HAP-1 (cell line): ENCODE measurements at regions of chr3 and their contacts with region 1.

Region 1: GRCh38 chr3:53715815-53716483 is 130.3 kb downstream of the CHDH start:
- DNase-seq: no peak
- H3K4me3 ChIP-seq: no peak overlapping the region
- H3K4me1 ChIP-seq: no peaks in the 10 kb centered on the region
- H3K27me3 ChIP-seq: no peaks in the 10 kb centered on the region

Region 2: DNA sequence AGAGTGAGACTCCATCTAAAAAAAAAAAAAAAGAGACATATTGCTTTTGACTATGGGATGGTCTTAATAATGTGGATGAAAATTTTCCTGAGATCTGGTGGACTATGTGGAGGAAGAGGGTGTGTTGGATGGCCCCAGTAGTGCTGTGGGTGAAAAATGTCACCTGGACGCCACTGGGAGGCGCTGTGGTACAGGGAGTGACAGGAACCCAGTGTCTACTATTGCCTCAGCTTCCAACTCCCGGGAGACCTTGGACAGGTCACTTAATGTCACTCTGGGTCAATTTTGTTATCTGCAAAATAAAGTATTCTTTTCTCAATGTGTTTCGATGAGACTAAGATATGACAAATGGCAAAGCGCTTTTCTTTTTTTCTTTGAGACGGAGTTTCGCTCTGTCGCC is 340.9 kb before region 1 on chr3:
- in situ Hi-C with region 1: loop called (anchors 5 kb)
- DNase-seq: peak; percentile 53 to 89
- H3K4me3 ChIP-seq: no peak overlapping the region
- H3K4me1 ChIP-seq: peaks cover 8% of the 10 kb centered on the region
- H3K27me3 ChIP-seq: no peaks in the 10 kb centered on the region